Colonic mucosa (tissue), 4 donors: ENCODE measurements at regions of chr2 and their contacts with region 1.

Region 1: GRCh38 chr2:8999102-8999446 is 4.4 kb downstream of the MBOAT2 start:
- DNase-seq: no peak
- H3K4me3 ChIP-seq: no peak overlapping the region
- H3K27ac ChIP-seq: no peak overlapping the region
- H3K4me1 ChIP-seq: no peaks in the 10 kb centered on the region
- H3K27me3 ChIP-seq: no peaks in the 10 kb centered on the region
- CTCF ChIP-seq: no peak

Region 2: DNA sequence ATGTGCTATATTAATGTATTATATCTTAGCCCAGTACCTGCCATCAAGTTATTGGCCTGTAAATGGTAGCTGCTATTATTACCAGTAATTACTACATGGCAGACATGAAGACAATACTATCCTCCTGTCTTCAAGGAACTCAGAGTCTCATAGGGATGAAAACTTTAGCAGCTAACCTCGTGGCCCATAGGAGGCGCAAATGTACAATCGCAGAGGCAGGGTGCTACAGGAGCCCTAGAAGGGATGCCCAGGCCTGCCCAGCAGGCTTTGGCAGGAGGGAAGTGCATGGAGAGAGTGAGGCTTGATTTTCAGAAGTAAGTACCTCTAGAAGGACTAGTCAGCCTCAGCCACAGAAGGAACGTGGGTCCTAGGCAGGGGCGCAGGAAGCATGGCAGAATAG is 117.0 kb before region 1 on chr2:
- intact Hi-C with region 1: loop called (anchors 10 kb)
- DNase-seq: peak; percentile 52
- H3K4me3 ChIP-seq: no peak overlapping the region
- H3K27ac ChIP-seq: no peak overlapping the region
- H3K4me1 ChIP-seq: peaks cover 6% of the 10 kb centered on the region
- H3K27me3 ChIP-seq: no peaks in the 10 kb centered on the region
- CTCF ChIP-seq: peak; percentile 42

Region 3: GRCh38 chr2:10635430-10635829 is 1636.4 kb after region 1 on chr2:
- intact Hi-C with region 1: no loop called
- DNase-seq: no peak
- H3K4me3 ChIP-seq: no peak overlapping the region
- H3K27ac ChIP-seq: no peak overlapping the region
- H3K4me1 ChIP-seq: no peaks in the 10 kb centered on the region
- H3K27me3 ChIP-seq: no peaks in the 10 kb centered on the region
- CTCF ChIP-seq: no peak